Transverse colon (tissue), 4 donors: ENCODE measurements at regions of chr13 and their contacts with region 1.

Region 1: DNA sequence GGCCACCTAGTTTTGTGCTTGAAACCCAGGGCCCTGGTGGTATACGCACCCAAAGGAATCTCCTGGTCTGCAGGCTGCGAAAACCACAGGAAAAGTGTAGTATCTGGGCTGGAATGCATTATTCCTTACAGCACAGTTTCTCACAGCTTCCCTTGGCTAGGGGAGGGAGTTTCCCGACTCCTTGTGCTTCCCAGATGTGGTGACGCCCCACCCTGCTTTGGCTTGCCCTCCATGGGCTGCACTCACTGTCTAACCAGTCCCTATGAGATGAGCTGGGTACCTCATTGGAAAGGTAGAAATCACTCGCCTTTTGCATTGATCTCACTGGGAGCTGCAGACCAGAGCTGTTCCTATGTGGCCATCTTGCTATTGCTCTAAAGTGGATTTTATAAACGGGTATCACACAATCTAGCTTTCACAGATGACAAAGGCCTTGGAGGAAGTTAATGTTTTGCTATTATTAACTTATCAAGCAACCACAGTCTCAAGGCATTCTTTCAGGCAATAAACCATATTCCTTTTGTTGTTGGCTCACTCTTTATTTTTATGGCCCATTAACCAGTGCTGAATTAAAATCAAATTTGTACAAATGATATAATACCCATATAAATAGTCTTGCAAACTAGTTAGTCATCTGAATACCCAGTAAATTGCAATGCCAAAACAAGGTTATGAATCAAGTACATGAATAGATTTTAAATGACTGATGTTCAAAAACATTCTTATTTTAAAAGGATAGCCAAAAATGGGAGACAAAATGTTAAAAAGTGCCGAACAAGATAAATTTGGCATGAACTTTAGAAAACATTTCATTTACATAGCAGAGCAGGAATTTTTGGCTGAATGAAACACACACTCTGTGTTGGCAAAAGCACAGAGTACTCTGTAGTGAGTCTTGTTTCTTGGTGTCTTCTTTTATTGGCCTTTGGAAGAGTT is 475.4 kb upstream of the ARGLU1 start:
- DNase-seq: no peak
- H3K4me3 ChIP-seq: no peak overlapping the region
- H3K27ac ChIP-seq: no peak overlapping the region
- H3K4me1 ChIP-seq: no peaks in the 10 kb centered on the region
- H3K27me3 ChIP-seq: no peaks in the 10 kb centered on the region
- CTCF ChIP-seq: no peak
- EP300 ChIP-seq: no peak
- POLR2A ChIP-seq: no peak

Region 2: DNA sequence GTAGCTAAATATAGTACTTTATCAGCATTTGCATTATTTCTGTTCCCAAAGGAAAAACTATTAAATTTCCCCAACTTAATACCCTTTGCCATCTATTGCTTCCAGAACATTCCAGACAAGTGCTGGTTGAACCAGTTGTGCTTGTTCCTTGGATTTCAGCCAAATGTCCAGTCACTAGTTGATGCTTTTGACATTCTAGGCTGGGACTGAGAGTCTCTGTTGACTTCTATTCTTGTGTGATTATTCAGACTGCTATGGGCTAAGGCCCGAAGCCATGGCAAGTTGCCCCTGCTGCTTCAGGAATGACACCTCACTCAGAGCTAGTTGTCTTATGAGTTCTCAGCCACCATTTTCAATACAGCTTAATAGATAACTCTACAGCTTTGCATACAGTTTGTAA is 17.3 kb before region 1 on chr13:
- in situ Hi-C with region 1: no loop called
- intact Hi-C with region 1: loop called (anchors 1 kb)
- DNase-seq: no peak
- H3K4me3 ChIP-seq: no peak overlapping the region
- H3K27ac ChIP-seq: no peak overlapping the region
- H3K4me1 ChIP-seq: no peaks in the 10 kb centered on the region
- H3K27me3 ChIP-seq: no peaks in the 10 kb centered on the region
- CTCF ChIP-seq: no peak
- EP300 ChIP-seq: no peak
- POLR2A ChIP-seq: no peak